AG04449 (cell line): ENCODE measurements at regions of chr17 and their contacts with region 1.

Region 1: DNA sequence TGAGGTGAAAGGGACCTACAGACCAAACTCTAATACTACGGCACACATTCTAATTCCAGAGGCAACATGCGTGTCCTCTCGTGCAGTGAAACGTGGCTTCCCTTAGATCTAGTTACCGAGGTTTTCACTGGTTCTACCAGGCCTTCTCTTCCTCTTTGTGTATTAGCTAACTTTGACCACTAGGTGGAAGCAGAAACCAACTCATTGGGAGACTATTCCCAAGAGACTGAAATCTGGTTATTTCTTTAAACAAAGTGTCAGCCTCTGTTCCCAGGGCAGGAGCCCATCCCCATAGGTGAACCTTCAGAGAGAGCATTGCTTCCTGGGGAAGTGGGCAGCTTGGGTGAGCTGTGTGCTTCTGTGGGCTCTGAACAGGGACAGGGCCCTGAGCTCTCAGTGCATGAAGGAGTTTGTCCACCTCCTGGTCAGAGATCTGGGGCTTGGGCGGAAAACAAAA is 19.7 kb upstream of the RCVRN start:
- DNase-seq: no peak
- H3K4me3 ChIP-seq: no peak overlapping the region
- CTCF ChIP-seq: peak; percentile 61

Region 2: GRCh38 chr17:9729034-9729650 is 195.6 kb before region 1 on chr17:
- CTCF ChIA-PET with region 1: interaction called, 10 read pairs
- POLR2A ChIA-PET with region 1: no interaction called
- DNase-seq: peak; percentile 0
- H3K4me3 ChIP-seq: no peak overlapping the region
- CTCF ChIP-seq: peak; percentile 85

Region 3: GRCh38 chr17:9937241-9937761 is 12.5 kb after region 1 on chr17:
- CTCF ChIA-PET with region 1: interaction called, 50 read pairs
- POLR2A ChIA-PET with region 1: interaction called, 3 read pairs
- DNase-seq: no peak
- H3K4me3 ChIP-seq: no peak overlapping the region
- CTCF ChIP-seq: no peak

Region 4: DNA sequence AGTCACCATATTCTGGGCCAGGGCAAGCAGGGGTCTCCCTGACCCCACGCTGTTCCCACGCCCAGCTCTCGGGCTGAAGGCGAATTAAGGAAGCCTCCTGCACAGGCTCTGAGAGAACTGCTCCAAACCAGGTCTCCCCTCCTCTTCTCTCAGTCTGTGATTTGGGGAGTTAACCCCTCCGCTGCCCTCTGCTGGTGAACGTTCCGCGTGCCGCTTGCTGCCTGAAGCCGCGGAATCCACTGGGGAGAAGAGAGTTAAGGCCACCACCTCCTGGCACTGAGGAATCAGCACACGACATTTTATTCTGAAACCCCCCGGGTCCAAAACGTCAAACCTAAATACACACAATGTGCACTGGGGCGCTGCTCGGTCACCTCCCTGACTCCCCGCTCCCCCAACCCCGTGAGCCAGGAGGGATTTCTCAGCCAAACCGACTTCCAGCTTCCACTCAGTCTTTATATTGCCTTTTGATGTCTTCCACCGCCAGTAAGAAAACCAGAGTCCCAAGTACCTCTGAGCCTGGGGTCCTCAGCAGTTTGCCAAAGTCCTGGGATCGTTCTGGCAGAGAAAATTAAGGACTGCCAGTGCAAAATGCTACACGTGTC is 34.7 kb after region 1 on chr17:
- CTCF ChIA-PET with region 1: interaction called, 38 read pairs
- POLR2A ChIA-PET with region 1: no interaction called
- DNase-seq: no peak
- H3K4me3 ChIP-seq: no peak overlapping the region
- CTCF ChIP-seq: peak; percentile 82

Region 5: DNA sequence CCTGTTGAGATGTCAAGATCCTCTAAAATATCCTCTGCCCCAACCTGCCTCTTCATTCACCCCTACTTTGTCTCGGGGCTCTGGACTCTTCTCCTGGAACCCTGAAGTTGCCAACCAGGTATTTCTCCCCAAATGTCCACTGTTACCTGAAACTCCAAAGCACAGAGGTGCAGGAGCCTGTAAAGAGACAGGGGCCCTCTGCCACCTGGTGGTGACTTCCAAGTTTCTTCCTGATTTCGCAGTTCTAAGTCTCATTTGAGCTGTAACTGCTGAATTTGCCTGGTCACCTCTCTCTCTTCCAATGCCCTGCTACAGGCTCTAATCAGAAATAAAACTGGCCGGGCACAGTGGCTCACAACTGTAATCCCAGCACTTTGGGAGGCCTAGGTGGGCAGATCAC is 57.4 kb after region 1 on chr17:
- CTCF ChIA-PET with region 1: interaction called, 10 read pairs
- POLR2A ChIA-PET with region 1: no interaction called
- DNase-seq: no peak
- H3K4me3 ChIP-seq: no peak overlapping the region
- CTCF ChIP-seq: no peak

Region 6: GRCh38 chr17:10226930-10227685 is 302.3 kb after region 1 on chr17:
- CTCF ChIA-PET with region 1: interaction called, 38 read pairs
- POLR2A ChIA-PET with region 1: no interaction called
- DNase-seq: no peak
- H3K4me3 ChIP-seq: no peak overlapping the region
- CTCF ChIP-seq: peak; percentile 85